ENCODE measurements at regions of chr12 and their contacts with region 1.

Region 1: GRCh38 chr12:779745-780734 is 27.7 kb downstream of the WNK1 start:
- DNase-seq: no peak
- H3K4me3 Mint-ChIP-seq: peak overlapping the region; percentile 62
- H3K27ac Mint-ChIP-seq: peak overlapping the region; percentile 50
- H3K4me1 Mint-ChIP-seq: peaks cover 50% of the 10 kb centered on the region
- H3K27me3 Mint-ChIP-seq: no peaks in the 10 kb centered on the region

Region 2: DNA sequence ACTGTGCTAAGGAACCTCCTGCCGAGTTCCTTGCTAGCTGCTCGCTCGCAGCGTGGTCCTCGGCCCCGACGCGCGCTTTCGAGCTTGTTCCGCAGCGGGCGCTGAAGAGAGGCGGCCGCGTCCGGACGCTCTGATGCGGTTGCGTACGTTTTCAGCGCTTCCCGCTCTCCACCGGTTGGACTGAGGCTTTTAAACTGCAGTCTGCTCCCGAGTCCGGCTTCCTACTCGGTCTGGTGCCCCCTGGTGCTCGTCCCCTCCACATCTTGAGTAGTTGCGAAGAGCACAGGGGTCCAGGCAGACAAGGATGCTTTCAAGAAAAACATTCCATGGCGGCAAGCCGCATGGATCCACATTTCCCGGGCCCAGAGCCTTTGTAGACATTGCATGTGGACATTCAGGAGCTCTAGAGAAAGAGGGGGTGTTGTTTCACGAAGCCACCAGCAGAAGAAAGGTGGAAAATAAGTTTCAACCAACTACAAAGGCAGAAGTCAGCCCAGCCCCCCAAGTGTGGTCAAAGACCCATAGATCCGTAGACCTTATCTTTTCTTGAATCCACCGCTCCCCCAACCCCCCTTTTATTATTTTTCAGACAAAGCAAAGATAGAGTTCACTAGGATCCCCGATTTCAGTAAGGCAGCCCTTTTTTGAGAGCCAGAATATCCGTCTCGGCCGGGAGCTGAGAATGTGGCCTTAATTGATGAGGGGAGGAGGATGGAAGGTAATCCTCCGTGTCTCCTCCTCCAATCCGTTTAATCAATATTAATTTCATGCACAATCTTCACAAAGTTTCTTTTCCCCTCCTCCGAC is 28.6 kb before region 1 on chr12:
- intact Hi-C with region 1: no loop called
- DNase-seq: peak; percentile 87
- H3K4me3 Mint-ChIP-seq: no peak overlapping the region
- H3K27ac Mint-ChIP-seq: no peak overlapping the region
- H3K4me1 Mint-ChIP-seq: peaks cover 28% of the 10 kb centered on the region
- H3K27me3 Mint-ChIP-seq: no peaks in the 10 kb centered on the region

Region 3: GRCh38 chr12:795305-795704 is 15.3 kb after region 1 on chr12:
- intact Hi-C with region 1: loop called (anchors 2 kb)
- DNase-seq: peak; percentile 51
- H3K4me3 Mint-ChIP-seq: peak overlapping the region; percentile 48
- H3K27ac Mint-ChIP-seq: peak overlapping the region; percentile 94
- H3K4me1 Mint-ChIP-seq: peaks cover 58% of the 10 kb centered on the region
- H3K27me3 Mint-ChIP-seq: no peaks in the 10 kb centered on the region

Region 4: GRCh38 chr12:943051-943450 is 163.0 kb after region 1 on chr12:
- intact Hi-C with region 1: no loop called
- DNase-seq: no peak
- H3K4me3 Mint-ChIP-seq: no peak overlapping the region
- H3K27ac Mint-ChIP-seq: no peak overlapping the region
- H3K4me1 Mint-ChIP-seq: peaks cover 34% of the 10 kb centered on the region
- H3K27me3 Mint-ChIP-seq: no peaks in the 10 kb centered on the region

Region 5: GRCh38 chr12:1328391-1328790 is 548.4 kb after region 1 on chr12:
- intact Hi-C with region 1: loop called (anchors 5 kb)
- DNase-seq: no peak
- H3K4me3 Mint-ChIP-seq: no peak overlapping the region
- H3K27ac Mint-ChIP-seq: no peak overlapping the region
- H3K4me1 Mint-ChIP-seq: peaks cover 7% of the 10 kb centered on the region
- H3K27me3 Mint-ChIP-seq: no peaks in the 10 kb centered on the region